HCT116 (cell line): ENCODE measurements at regions of chr18 and their contacts with region 1.

Region 1: GRCh38 chr18:79246348-79247108 is 149.2 kb upstream of the NFATC1 start:
- DNase-seq: peak; percentile 83
- ATAC-seq: peak; percentile 96
- H3K4me3 ChIP-seq: peak overlapping the region; percentile 41 to 53
- H3K27ac ChIP-seq: peak overlapping the region; percentile 76
- H3K4me1 ChIP-seq: peaks cover 6 to 23% of the 10 kb centered on the region in 2 experiments
- H3K27me3 ChIP-seq: no peaks in the 10 kb centered on the region
- CTCF ChIP-seq: peak; percentile 59 to 99 (median 98); a peak in 5 of 6 replicates
- POLR2A ChIP-seq: no peak
- RAD21 ChIP-seq: peak; percentile 85

Region 2: GRCh38 chr18:78875268-78875997 is 371.1 kb before region 1 on chr18:
- CTCF ChIA-PET with region 1: no interaction called
- POLR2A ChIA-PET with region 1: no interaction called
- RAD21 ChIA-PET with region 1: no interaction called
- intact Hi-C with region 1: loop called (anchors 5 kb)
- DNase-seq: peak; percentile 19
- ATAC-seq: peak; percentile 81
- H3K4me3 ChIP-seq: no peak overlapping the region
- H3K27ac ChIP-seq: no peak overlapping the region
- H3K4me1 ChIP-seq: no peaks in the 10 kb centered on the region
- H3K27me3 ChIP-seq: 0 out of 2 replicates have a peak, but pooled peaks cover 7% of the 10 kb centered on the region
- CTCF ChIP-seq: peak; percentile 49 to 79 (median 75); a peak in 5 of 6 replicates
- POLR2A ChIP-seq: no peak
- RAD21 ChIP-seq: peak; percentile 47

Region 3: GRCh38 chr18:78984941-78985784 is 261.4 kb before region 1 on chr18:
- CTCF ChIA-PET with region 1: no interaction called
- POLR2A ChIA-PET with region 1: no interaction called
- RAD21 ChIA-PET with region 1: no interaction called
- intact Hi-C with region 1: loop called (anchors 2 kb)
- DNase-seq: no peak
- ATAC-seq: peak; percentile 44; the same call in 1 of the 2 replicates
- H3K4me3 ChIP-seq: no peak overlapping the region
- H3K27ac ChIP-seq: no peak overlapping the region
- H3K4me1 ChIP-seq: no peaks in the 10 kb centered on the region
- H3K27me3 ChIP-seq: peaks cover 15% of the 10 kb centered on the region
- CTCF ChIP-seq: peak; percentile 12 to 39 (median 32); a peak in 2 of 6 replicates
- POLR2A ChIP-seq: no peak
- RAD21 ChIP-seq: peak; percentile 46

Region 4: DNA sequence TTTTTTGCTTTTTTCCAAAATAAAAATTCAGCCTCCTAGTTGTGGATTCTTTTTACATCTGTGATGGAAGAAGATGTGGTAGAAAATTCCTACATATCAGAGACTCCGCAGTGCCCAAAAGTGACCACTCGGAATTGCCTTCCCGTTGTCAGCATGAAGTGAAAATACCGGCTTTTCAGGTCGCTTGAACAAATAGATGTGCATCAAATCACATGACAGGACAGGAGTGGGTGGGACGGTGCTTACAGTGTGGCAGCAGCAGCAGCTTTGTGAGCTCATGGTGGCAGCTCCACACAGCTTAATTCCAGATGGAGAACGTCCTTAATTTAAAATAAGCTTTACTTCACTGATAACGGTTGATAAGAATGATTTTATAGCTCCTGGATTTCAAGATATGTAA is 246.6 kb before region 1 on chr18:
- CTCF ChIA-PET with region 1: no interaction called
- POLR2A ChIA-PET with region 1: no interaction called
- RAD21 ChIA-PET with region 1: no interaction called
- intact Hi-C with region 1: loop called (anchors 5 kb)
- DNase-seq: peak; percentile 29
- ATAC-seq: peak; percentile 78
- H3K4me3 ChIP-seq: 0 out of 4 replicates have a peak overlapping the region, but pooled peaks of 1 of the 2 experiments have one; percentile 6
- H3K27ac ChIP-seq: no peak overlapping the region
- H3K4me1 ChIP-seq: peaks cover 11 to 12% of the 10 kb centered on the region in 2 experiments; a peak in 3 of 4 replicates
- H3K27me3 ChIP-seq: no peaks in the 10 kb centered on the region
- CTCF ChIP-seq: no peak
- POLR2A ChIP-seq: no peak
- RAD21 ChIP-seq: no peak

Region 5: DNA sequence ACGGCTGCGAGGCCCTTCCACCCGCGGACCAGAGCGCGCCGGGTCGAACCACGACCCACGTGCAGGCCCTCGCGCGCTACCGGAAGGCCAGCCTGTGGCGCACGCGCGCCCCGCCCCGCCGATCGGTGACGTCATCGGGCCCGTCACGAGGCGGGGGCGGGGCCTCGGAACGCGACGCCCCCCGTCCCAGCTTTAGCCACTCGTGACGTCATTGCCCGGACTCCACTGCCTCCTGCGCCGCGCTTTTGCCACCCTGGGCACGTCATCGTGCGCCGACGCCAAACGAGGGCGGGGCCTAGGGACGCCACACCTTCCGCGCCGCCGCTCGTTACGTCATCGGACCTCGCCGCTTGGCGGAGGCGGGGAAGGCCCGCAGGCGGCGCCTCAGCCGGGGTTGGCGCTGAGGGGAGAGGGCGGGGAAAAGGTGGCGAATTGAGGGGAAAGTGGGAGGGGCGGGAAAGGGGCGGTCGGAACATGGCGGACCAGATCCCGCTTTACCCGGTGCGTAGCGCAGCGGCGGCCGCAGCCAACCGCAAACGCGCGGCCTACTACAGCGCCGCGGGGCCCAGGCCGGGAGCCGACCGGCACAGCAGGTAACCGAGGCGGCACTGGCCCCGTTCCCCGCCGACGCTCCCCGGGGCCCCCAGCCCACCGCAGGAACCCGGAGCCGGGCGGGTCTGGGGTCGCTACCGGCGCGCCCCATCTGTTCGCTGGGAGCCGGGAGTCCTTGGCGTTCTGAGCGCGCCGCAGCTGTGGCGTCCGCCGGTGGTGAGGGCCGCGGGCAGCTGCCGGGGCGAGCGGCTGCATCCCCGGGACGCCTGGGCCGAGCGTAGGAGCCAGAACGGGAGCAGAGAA is 177.4 kb before region 1 on chr18 and contains the start of gene ATP9B:
- CTCF ChIA-PET with region 1: no interaction called
- POLR2A ChIA-PET with region 1: no interaction called
- RAD21 ChIA-PET with region 1: no interaction called
- intact Hi-C with region 1: loop called (anchors 1 kb)
- DNase-seq: peak; percentile 87
- ATAC-seq: peak; percentile 92
- H3K4me3 ChIP-seq: peak within 1 kb of the TSS; percentile 73 to 82
- H3K27ac ChIP-seq: peak within 1 kb of the TSS; percentile 85
- H3K4me1 ChIP-seq: peaks cover 0 to 15% of the 10 kb centered on the region in 2 experiments; a peak in 3 of 4 replicates
- H3K27me3 ChIP-seq: no peaks in the 10 kb centered on the region
- CTCF ChIP-seq: 0 out of 6 replicates have a peak, but pooled peaks of 1 of the 3 experiments have one; percentile 4
- POLR2A ChIP-seq: no peak
- RAD21 ChIP-seq: no peak
- total RNA-seq, gene ATP9B: 17.8 TPM